MCF 10A (cell line): ENCODE measurements at regions of chr13 and their contacts with region 1.

Region 1: DNA sequence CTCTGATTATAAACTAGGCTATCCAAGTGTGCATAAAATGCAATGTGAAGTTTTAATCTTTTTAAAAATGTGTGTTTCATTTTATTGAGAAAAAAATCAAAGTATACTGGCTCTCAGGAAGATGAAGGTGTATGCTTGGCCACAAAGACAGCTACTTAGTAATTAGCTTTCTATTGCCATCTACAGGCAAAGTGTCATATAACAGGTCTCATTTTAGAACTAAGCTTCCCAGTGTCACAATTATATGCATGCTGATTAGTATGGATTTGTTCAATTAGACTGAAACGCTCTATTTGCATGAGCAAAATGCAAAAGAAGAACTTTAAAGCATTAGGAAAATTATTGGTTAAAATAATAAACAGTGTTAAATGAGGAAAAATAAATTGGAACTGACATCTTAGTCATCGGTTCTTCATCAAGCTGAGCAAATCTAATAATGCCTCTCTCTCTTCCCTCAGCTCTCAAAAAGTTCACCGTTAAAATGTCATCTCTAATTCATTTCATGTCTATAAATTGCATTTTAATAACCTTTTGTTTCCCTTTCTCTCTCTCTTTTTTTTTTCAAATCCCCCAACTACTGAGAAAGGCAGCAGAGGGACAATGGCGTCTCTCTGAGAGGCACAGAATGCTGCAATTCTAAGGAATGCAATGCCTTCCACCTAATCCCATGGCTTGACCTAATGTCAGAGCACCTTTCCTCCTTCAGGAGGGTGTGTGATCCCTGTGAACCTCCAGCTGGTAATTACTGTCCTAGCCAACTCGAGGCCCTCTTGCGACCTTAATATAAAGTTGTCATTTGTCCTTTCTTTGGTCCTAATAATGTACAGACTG is 313.1 kb upstream of the MAB21L1 start:
- DNase-seq: peak; percentile 40
- H3K4me3 Mint-ChIP-seq: no peak overlapping the region
- H3K27ac Mint-ChIP-seq: no peak overlapping the region
- H3K4me1 Mint-ChIP-seq: peaks cover 6% of the 10 kb centered on the region
- H3K27me3 Mint-ChIP-seq: peaks cover 6% of the 10 kb centered on the region
- CTCF ChIP-seq: peak; percentile 51

Region 2: GRCh38 chr13:35210261-35210660 is 579.3 kb before region 1 on chr13:
- CTCF ChIA-PET with region 1: interaction called, 3 read pairs
- POLR2A ChIA-PET with region 1: no interaction called
- intact Hi-C with region 1: loop called (anchors 5 kb)
- DNase-seq: peak; percentile 10
- H3K4me3 Mint-ChIP-seq: no peak overlapping the region
- H3K27ac Mint-ChIP-seq: no peak overlapping the region
- H3K4me1 Mint-ChIP-seq: no peaks in the 10 kb centered on the region
- H3K27me3 Mint-ChIP-seq: no peaks in the 10 kb centered on the region
- CTCF ChIP-seq: no peak

Region 3: DNA sequence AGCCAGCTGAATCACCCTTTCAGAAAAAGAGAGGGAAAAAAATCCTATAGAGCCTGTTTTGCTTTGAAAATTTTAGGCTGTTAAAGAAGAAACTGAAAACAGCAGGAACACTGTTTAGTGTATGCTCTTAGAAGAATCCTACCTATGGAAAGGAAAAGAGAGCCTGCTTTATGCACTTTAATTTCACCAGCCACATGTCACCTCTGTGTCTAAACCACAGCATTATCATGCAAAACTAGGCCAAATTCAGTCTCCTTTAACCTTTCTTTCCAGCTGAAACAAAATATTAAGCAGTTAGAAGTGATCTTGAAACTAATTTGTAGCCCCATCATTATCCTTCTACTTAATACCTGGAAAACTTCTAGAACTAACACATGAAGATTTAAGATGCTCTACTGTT is 215.9 kb before region 1 on chr13:
- CTCF ChIA-PET with region 1: no interaction called
- POLR2A ChIA-PET with region 1: no interaction called
- intact Hi-C with region 1: no loop called
- DNase-seq: no peak
- H3K4me3 Mint-ChIP-seq: no peak overlapping the region
- H3K27ac Mint-ChIP-seq: no peak overlapping the region
- H3K4me1 Mint-ChIP-seq: no peaks in the 10 kb centered on the region
- H3K27me3 Mint-ChIP-seq: no peaks in the 10 kb centered on the region
- CTCF ChIP-seq: no peak

Region 4: DNA sequence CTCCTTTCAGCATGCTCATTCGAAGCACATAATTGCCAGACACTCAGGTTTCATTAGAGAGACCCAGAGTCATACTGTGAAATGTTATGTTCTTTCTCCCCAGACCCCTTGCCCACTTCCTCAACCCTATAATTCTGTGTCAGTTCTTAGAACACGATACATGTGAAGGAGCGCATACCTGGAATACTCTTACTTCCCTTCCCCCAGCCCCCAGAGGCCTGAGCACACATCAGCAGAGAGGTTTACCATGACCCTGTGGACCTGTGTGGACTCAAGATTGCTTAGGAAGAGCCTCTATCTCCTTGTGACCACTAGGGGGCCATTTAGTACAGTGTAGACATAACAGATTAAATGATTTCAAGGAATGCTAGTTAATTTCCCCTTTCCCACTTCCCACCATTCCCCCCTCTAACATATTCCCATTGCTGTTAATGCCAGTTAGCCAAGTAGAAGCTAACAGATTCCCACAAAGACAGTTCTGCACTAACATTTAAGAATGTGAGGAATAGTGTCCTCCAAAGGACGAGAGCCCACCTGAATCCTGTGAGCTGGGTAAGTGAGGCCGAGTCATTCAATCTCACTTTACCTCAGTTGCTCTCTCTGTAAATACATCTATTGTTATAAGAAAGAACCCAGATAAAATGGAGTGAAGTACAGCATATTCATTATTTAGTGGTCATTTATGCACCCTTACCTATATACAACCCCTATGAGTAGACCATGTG is 158.8 kb before region 1 on chr13:
- CTCF ChIA-PET with region 1: interaction called, 9 read pairs
- POLR2A ChIA-PET with region 1: no interaction called
- intact Hi-C with region 1: loop called (anchors 5 kb)
- DNase-seq: peak; percentile 66
- H3K4me3 Mint-ChIP-seq: no peak overlapping the region
- H3K27ac Mint-ChIP-seq: no peak overlapping the region
- H3K4me1 Mint-ChIP-seq: no peaks in the 10 kb centered on the region
- H3K27me3 Mint-ChIP-seq: no peaks in the 10 kb centered on the region
- CTCF ChIP-seq: peak; percentile 65

Region 5: GRCh38 chr13:35771898-35772297 is 17.7 kb before region 1 on chr13:
- CTCF ChIA-PET with region 1: interaction called, 14 read pairs
- POLR2A ChIA-PET with region 1: no interaction called
- intact Hi-C with region 1: no loop called
- DNase-seq: peak; percentile 13
- H3K4me3 Mint-ChIP-seq: no peak overlapping the region
- H3K27ac Mint-ChIP-seq: no peak overlapping the region
- H3K4me1 Mint-ChIP-seq: peaks cover 5% of the 10 kb centered on the region
- H3K27me3 Mint-ChIP-seq: peaks cover 5% of the 10 kb centered on the region
- CTCF ChIP-seq: no peak

Region 6: DNA sequence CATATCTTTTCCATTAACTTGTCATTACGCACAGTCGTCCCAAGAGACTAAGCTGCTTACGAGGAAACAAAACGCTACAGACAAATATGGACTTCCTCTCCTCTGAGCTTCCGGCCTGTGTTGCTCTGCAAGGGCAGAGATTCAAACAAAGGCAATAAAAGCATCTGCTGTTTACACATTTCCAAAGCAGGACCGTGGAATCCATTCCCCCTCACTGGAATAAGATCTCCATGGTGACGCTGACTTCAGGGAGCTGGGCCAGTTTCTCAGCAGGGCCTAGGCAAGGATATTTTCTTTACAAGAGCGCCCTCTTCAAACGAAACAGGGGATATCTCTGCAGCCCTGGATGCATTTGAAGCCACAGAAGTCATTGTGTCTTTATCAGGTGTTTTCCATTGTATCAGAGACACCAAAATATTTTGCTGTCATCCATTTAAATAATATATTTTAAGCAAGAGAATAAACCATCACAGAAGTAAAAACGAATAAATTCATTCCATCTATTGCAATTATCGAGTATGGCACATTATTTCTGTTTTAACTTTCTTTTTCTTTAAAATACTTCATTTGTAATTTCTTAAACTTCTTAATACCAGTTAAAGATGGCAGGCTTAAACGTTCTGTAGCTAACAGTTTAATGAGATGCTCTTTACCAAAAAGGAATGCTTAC is 164.1 kb after region 1 on chr13:
- CTCF ChIA-PET with region 1: no interaction called
- POLR2A ChIA-PET with region 1: no interaction called
- intact Hi-C with region 1: no loop called
- DNase-seq: peak; percentile 64
- H3K4me3 Mint-ChIP-seq: no peak overlapping the region
- H3K27ac Mint-ChIP-seq: no peak overlapping the region
- H3K4me1 Mint-ChIP-seq: no peaks in the 10 kb centered on the region
- H3K27me3 Mint-ChIP-seq: peaks cover 17% of the 10 kb centered on the region
- CTCF ChIP-seq: peak; percentile 47